ENCODE measurements at regions of chr4 and their contacts with region 1.

Region 1: GRCh38 chr4:113394730-113395530 is 345.5 kb downstream of the ANK2 start:
- DNase-seq: peak; percentile 24 to 78
- ATAC-seq: peak; percentile 98 to 100
- H3K4me3 ChIP-seq: no peak overlapping the region
- H3K27ac ChIP-seq: peak overlapping the region in 1 of 2 experiments; percentile 68; a peak in 4 of 6 replicates
- H3K4me1 ChIP-seq: no peaks in the 10 kb centered on the region
- CTCF ChIP-seq: peak; percentile 77
- EP300 ChIP-seq: no peak
- POLR2A ChIP-seq: no peak
- RAD21 ChIP-seq: peak; percentile 85 to 87

Region 2: DNA sequence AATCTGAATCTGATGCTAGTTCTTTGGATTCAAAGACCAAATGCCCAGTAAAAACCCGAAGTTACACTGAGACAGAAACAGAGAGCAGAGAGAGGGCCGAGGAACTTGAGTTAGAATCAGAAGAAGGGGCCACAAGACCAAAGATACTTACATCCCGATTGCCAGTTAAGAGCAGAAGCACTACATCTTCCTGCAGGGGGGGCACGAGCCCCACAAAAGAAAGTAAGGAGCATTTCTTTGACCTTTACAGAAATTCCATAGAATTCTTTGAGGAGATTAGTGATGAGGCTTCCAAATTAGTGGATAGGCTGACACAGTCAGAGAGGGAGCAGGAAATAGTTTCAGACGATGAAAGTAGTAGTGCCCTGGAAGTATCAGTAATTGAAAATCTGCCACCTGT is 36.1 kb before region 1 on chr4:
- CTCF ChIA-PET with region 1: no interaction called
- POLR2A ChIA-PET with region 1: no interaction called
- DNase-seq: peak in 1 of 2 experiments; percentile 6
- ATAC-seq: peak in 1 of 2 experiments; percentile 32; a peak in 1 of 6 replicates
- H3K4me3 ChIP-seq: no peak overlapping the region
- H3K27ac ChIP-seq: no peak overlapping the region
- H3K4me1 ChIP-seq: no peaks in the 10 kb centered on the region
- CTCF ChIP-seq: 0 out of 3 replicates have a peak, but pooled peaks have one; percentile 16
- EP300 ChIP-seq: no peak
- POLR2A ChIP-seq: no peak
- RAD21 ChIP-seq: peak; percentile 25 to 51; a peak in 2 of 5 replicates

Region 3: DNA sequence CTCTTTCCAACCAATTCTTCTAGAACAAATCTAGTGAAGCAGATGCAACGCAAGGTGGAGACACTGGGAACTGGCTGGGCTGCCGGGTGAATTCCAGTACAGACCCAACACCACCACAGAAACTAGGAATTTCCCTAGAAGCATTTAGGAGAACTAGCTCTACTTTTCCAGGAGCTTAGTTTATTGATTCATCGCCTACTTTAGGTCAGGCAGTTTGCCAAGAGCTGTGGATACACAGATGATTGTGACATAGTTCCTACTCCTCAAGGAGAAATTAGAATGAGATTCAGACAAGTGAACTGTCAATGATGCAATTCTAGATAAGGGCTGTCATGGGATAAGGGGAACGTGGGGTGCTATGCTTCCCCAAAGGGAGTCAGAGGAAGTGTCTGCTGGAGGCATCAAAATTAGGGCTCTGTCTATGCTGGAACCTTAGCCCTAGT is 16.6 kb after region 1 on chr4:
- CTCF ChIA-PET with region 1: interaction called, 22 read pairs
- POLR2A ChIA-PET with region 1: no interaction called
- DNase-seq: peak in 1 of 2 experiments; percentile 13
- ATAC-seq: no peak
- H3K4me3 ChIP-seq: no peak overlapping the region
- H3K27ac ChIP-seq: no peak overlapping the region
- H3K4me1 ChIP-seq: no peaks in the 10 kb centered on the region; the same call in 2 of the 3 replicates
- CTCF ChIP-seq: no peak
- EP300 ChIP-seq: no peak
- POLR2A ChIP-seq: no peak
- RAD21 ChIP-seq: no peak

Measured in A549 (cell line).